ENCODE measurements at regions of chr1 and their contacts with region 1.

Region 1: GRCh38 chr1:16078925-16079656 is 5.6 kb upstream of the FAM131C start:
- DNase-seq: no peak
- ATAC-seq: peak; percentile 58
- H3K4me3 ChIP-seq: no peak overlapping the region
- H3K27ac ChIP-seq: peak overlapping the region; percentile 31; the same call in 1 of the 2 replicates
- H3K4me1 ChIP-seq: peaks cover 30 to 66% of the 10 kb centered on the region in 2 experiments
- H3K27me3 ChIP-seq: no peaks in the 10 kb centered on the region
- CTCF ChIP-seq: peak in 2 of 3 experiments; percentile 93 to 94; a peak in 4 of 6 replicates
- POLR2A ChIP-seq: no peak
- RAD21 ChIP-seq: no peak

Region 2: DNA sequence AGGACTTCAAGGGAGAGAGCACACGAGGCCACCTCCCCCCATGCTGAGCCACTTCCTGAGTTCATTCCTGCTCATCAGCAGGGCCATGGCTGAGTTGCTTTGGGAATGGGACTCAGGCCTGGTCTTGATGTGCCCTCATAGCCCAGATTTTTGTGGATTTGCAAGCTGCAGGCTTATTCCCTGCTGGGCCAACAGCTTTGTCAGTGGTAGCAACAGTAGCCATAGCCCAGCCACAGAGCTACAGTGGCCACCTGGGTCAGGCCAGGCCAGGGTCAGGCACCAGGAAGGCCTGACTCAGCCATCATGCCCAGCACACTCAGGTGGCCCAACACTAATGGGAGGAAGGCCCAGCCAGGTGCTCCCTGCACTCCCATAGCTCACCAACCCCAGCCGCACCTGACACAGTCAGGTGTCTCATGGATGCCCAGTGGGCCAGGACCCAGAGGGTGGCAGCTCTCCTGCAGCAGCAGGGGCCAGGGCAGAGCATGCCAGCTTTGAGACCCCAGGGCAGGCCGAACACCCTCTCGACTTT is 43.3 kb after region 1 on chr1:
- CTCF ChIA-PET with region 1: interaction called, 12 read pairs
- POLR2A ChIA-PET with region 1: interaction called, 3 read pairs
- RAD21 ChIA-PET with region 1: interaction called in 1 of 2 experiments, 3 read pairs
- intact Hi-C with region 1: no loop called
- DNase-seq: no peak
- ATAC-seq: peak; percentile 25
- H3K4me3 ChIP-seq: no peak overlapping the region
- H3K27ac ChIP-seq: no peak overlapping the region; the same call in 1 of the 2 replicates
- H3K4me1 ChIP-seq: peaks cover 2 to 22% of the 10 kb centered on the region in 2 experiments; a peak in 3 of 4 replicates
- H3K27me3 ChIP-seq: no peaks in the 10 kb centered on the region
- CTCF ChIP-seq: no peak
- POLR2A ChIP-seq: no peak
- RAD21 ChIP-seq: no peak

Region 3: DNA sequence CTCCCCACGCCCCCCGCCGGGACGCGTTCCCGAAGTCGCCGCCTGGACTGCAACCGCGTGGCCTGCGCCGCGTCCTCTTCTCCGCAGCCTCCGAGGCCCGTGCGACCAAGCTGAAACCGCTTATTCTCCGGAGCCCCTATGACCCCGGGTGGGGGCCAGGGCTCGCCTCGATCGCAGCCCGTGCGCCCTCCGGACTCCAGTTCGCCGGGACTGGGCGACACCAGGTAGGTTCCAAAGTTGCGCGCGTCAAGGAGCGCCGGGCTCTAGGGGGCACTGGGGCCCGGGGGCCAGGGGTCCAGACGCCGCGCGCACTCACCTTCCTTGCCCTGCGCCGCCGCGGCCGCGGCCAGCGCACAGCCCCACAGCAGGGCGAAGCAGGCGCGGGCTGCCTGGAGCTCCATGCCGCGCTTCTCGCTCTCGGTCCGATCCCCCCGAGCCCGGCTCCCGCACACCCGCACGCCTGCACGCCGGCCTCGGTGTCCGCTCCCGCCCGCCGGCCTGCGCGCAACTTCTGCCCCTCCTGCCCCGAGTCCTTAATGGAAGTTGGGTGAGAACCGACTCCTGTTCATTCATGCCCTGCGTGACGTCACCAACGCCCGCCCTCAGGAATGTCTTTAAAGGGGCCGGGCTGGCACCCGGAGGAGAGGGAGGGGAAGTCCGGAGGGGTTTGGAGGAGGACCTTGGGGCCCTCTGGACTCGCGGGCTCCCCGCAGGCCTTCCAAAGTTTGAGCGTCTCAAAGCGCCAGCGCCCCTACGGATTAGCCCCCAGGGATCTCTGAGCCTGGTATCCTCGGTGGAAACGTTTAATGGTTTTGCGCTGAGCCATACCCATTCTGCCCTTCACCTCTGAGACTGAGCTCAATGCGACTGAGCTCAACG is 76.7 kb after region 1 on chr1 and contains the start of gene EPHA2:
- CTCF ChIA-PET with region 1: interaction called, 11 read pairs
- POLR2A ChIA-PET with region 1: interaction called, 3 read pairs
- RAD21 ChIA-PET with region 1: interaction called, 3 to 4 read pairs
- intact Hi-C with region 1: no loop called
- DNase-seq: peak; percentile 87
- ATAC-seq: peak; percentile 69
- H3K4me3 ChIP-seq: peak within 1 kb of the TSS; percentile 75 to 93
- H3K27ac ChIP-seq: peak within 1 kb of the TSS; percentile 96
- H3K4me1 ChIP-seq: peaks cover 72 to 83% of the 10 kb centered on the region in 2 experiments
- H3K27me3 ChIP-seq: no peaks in the 10 kb centered on the region
- CTCF ChIP-seq: no peak
- POLR2A ChIP-seq: peak; percentile 96
- RAD21 ChIP-seq: no peak
- total RNA-seq, gene EPHA2: 164 TPM

Region 4: GRCh38 chr1:16187748-16188401 is 108.8 kb after region 1 on chr1:
- CTCF ChIA-PET with region 1: interaction called, 222 read pairs
- POLR2A ChIA-PET with region 1: interaction called, 31 read pairs
- RAD21 ChIA-PET with region 1: interaction called, 10 to 26 read pairs
- intact Hi-C with region 1: loop called (anchors 1 kb)
- DNase-seq: no peak
- ATAC-seq: peak; percentile 81
- H3K4me3 ChIP-seq: peak overlapping the region in 1 of 2 experiments; percentile 48; a peak in 1 of 4 replicates
- H3K27ac ChIP-seq: no peak overlapping the region; the same call in 1 of the 2 replicates
- H3K4me1 ChIP-seq: peaks cover 47 to 63% of the 10 kb centered on the region in 2 experiments
- H3K27me3 ChIP-seq: no peaks in the 10 kb centered on the region
- CTCF ChIP-seq: peak in 2 of 3 experiments; percentile 94 to 99; a peak in 4 of 6 replicates
- POLR2A ChIP-seq: no peak
- RAD21 ChIP-seq: no peak

Region 5: DNA sequence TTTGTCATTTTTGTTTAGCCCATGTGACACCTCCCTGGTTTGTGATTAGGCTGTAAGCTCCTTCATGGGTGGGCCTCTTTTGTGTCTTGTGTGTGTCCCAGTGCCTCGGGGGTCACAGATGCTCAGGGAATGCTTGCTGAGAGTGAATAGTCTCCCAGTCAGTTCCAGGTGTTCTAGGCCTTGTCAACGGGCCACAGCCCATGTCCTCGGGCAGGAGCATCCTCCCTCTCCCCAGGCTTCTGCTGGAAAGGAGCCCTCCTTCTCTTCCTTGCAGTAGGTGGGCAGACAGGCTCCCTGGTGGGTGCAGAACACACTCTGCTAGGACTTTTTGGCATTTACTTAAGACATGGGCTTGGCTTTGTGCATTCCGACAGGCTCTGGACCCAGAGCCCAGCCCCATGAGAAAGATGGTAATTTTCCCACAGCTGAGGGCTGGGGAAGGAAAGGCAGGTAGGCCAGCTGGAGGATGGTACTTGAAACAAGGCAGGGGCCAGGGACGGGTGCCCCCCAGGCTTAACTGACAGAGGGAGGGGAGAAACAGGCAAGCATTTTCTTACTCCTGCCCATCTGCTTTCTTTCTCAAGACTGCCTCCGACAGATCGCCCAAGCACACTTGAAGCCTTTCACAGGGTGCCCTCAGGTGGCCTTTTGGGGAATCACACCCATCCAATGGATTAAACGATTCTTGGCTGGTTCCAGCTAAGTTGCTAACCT is 165.0 kb after region 1 on chr1:
- CTCF ChIA-PET with region 1: interaction called, 26 read pairs
- POLR2A ChIA-PET with region 1: no interaction called
- RAD21 ChIA-PET with region 1: interaction called in 1 of 2 experiments, 7 read pairs
- intact Hi-C with region 1: loop called (anchors 1 kb)
- DNase-seq: peak; percentile 65
- ATAC-seq: peak; percentile 85
- H3K4me3 ChIP-seq: no peak overlapping the region
- H3K27ac ChIP-seq: no peak overlapping the region
- H3K4me1 ChIP-seq: peaks cover 5 to 11% of the 10 kb centered on the region in 2 experiments
- H3K27me3 ChIP-seq: no peaks in the 10 kb centered on the region
- CTCF ChIP-seq: peak; percentile 85 to 92 (median 89)
- POLR2A ChIP-seq: no peak
- RAD21 ChIP-seq: peak; percentile 98

Region 6: GRCh38 chr1:16260814-16261213 is 181.7 kb after region 1 on chr1:
- CTCF ChIA-PET with region 1: no interaction called
- POLR2A ChIA-PET with region 1: no interaction called
- RAD21 ChIA-PET with region 1: no interaction called
- intact Hi-C with region 1: no loop called
- DNase-seq: no peak
- ATAC-seq: peak; percentile 42; the same call in 1 of the 2 replicates
- H3K4me3 ChIP-seq: no peak overlapping the region
- H3K27ac ChIP-seq: no peak overlapping the region
- H3K4me1 ChIP-seq: peaks cover 8 to 12% of the 10 kb centered on the region in 2 experiments; a peak in 3 of 4 replicates
- H3K27me3 ChIP-seq: no peaks in the 10 kb centered on the region
- CTCF ChIP-seq: no peak
- POLR2A ChIP-seq: no peak
- RAD21 ChIP-seq: no peak

Region 7: GRCh38 chr1:16396591-16396990 is 317.5 kb after region 1 on chr1:
- CTCF ChIA-PET with region 1: no interaction called
- POLR2A ChIA-PET with region 1: no interaction called
- RAD21 ChIA-PET with region 1: no interaction called
- intact Hi-C with region 1: no loop called
- DNase-seq: no peak
- ATAC-seq: peak; percentile 39; the same call in 1 of the 2 replicates
- H3K4me3 ChIP-seq: no peak overlapping the region
- H3K27ac ChIP-seq: peak overlapping the region; percentile 25; the same call in 1 of the 2 replicates
- H3K4me1 ChIP-seq: peaks cover 0 to 5% of the 10 kb centered on the region in 2 experiments; a peak in 2 of 4 replicates
- H3K27me3 ChIP-seq: no peaks in the 10 kb centered on the region
- CTCF ChIP-seq: no peak
- POLR2A ChIP-seq: no peak
- RAD21 ChIP-seq: no peak

Measured in HCT116 (cell line).